Activated T-helper 1 cell treated with anti-CD3 and anti-CD28 coated beads, Interleukin-12 subunit alpha, Interleukin-12 subunit beta, Interleukin-2, Interleukin-4 antibody, amounts not matched to agents 30 ng/mL and 10 ng/mL and 1 ng/mL, durations not matched to agents 14 hours and 24 hours and 36 hours (primary cell): ENCODE measurements at regions of chr16 and their contacts with region 1.

Region 1: DNA sequence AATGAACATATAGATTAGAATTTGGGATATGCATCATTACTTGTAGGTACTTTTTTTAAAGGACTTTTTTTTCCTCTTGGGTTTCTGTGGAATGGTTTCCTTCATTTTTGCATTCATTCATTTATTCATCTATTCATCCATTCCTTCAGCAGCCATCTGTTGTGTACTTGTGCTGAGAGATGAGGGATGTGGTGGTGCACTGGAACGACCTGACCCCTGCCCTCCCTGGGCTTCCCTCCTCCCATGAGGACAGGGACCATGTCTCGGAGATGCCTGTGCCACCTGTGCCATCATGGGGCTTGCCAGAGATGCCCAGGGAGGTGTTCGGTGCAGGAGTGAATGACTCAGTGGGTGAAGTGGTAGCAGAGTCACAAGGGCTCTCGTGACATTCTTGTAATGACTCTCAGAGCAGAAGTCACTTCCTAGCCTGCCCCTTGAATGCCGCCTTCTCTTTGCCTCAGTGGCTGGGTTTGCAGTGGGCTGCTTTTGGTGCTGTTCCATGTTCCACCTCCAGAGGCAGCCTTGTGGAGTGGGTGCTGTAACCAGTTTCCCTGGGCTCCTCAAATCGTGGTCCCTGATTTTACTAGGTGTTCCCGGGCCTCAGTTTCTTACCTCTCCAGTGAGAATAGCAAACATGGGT is 43.9 kb downstream of the CLEC16A start:
- DNase-seq: peak; percentile 64
- H3K4me3 Mint-ChIP-seq: peak overlapping the region; percentile 65
- H3K27ac Mint-ChIP-seq: peak overlapping the region; percentile 93
- H3K4me1 Mint-ChIP-seq: peaks cover 92% of the 10 kb centered on the region
- H3K27me3 Mint-ChIP-seq: no peaks in the 10 kb centered on the region

Region 2: DNA sequence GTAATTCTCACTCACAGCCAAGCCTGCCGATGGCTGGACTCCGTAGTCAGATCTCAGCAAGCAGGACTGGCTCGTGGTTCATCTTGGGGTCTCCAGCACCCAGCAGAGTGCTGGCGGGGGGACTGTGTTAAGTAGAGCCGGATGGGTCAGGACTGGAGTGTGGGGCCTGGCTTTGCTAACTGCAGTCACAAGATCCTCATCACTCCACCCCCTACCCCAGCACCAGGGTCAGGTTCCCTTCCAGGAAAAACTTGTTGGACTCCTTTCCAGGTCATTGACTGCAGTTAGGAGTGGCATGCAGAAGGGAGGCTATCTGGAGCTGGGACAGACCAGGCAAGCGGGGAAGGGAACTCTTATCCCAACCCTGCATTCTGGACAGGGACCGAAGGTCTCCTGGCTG is 105.3 kb before region 1 on chr16:
- intact Hi-C with region 1: no loop called
- DNase-seq: no peak
- H3K4me3 Mint-ChIP-seq: no peak overlapping the region
- H3K27ac Mint-ChIP-seq: no peak overlapping the region
- H3K4me1 Mint-ChIP-seq: peaks cover 56% of the 10 kb centered on the region
- H3K27me3 Mint-ChIP-seq: peaks cover 19% of the 10 kb centered on the region

Region 3: DNA sequence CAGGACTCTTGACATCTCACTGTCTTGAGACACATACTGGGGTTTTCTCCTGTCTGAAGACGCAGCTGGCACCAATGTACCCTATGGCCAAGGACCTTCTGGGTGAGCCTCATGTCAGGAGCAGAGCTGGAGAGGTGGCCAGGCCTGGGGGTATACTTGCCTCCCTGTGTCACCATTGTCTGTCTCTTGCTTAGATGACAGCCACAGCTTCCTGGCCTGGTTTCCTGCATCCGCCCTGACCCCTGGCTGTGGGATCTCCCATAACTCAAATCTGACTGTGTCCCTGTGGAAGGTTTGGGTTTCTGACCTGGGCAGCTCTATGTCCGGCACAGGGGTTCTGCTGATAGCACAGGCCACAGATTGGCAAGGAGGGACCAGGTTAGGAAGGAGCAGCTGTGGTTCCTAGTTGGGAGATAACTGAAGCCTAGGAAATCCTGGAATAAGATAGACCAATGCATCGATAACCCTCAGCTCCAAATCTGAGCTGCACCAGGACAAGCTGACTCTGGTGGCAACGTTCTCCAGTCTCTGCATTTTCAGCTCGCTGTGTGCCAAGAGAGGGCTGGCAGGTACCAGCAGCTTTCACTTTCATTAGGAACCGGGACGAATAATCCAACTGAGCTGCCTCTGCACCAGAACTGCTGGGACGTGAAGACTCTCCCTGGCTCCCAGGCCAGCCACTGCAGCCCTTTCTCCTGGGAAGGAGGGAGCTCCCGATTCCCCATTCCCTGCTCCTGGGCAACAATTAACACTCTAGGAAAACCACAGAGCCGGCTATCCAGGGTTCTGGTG is 51.0 kb before region 1 on chr16:
- intact Hi-C with region 1: no loop called
- DNase-seq: no peak
- H3K4me3 Mint-ChIP-seq: peak overlapping the region; percentile 40
- H3K27ac Mint-ChIP-seq: no peak overlapping the region
- H3K4me1 Mint-ChIP-seq: peaks cover 58% of the 10 kb centered on the region
- H3K27me3 Mint-ChIP-seq: no peaks in the 10 kb centered on the region

Region 4: DNA sequence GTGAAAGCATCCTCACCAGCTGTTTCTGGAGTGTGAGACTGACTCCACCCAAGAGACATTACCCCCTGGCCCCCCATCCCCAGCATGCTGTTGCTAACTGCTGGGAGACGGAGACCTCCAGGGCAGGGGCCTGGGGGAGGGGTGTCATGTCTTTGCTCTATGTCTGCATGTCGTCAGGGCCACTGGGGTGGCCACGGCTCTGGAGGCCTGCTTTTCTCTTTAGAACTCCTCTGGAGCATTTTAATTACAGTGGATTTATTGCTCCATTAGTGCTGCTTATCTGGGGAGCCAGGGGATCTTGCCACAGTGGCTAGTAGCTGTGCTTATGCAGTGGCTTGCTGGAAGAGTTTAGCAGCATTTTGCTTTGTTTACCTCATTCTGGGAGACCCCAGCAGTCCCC is 11.7 kb before region 1 on chr16:
- intact Hi-C with region 1: loop called (anchors 1 kb)
- DNase-seq: no peak
- H3K4me3 Mint-ChIP-seq: no peak overlapping the region
- H3K27ac Mint-ChIP-seq: no peak overlapping the region
- H3K4me1 Mint-ChIP-seq: peaks cover 67% of the 10 kb centered on the region
- H3K27me3 Mint-ChIP-seq: no peaks in the 10 kb centered on the region

Region 5: GRCh38 chr16:11051879-11052808 is 63.9 kb after region 1 on chr16:
- intact Hi-C with region 1: loop called (anchors 1 kb)
- DNase-seq: peak; percentile 75
- H3K4me3 Mint-ChIP-seq: peak overlapping the region; percentile 60
- H3K27ac Mint-ChIP-seq: peak overlapping the region; percentile 83
- H3K4me1 Mint-ChIP-seq: peaks cover 68% of the 10 kb centered on the region
- H3K27me3 Mint-ChIP-seq: no peaks in the 10 kb centered on the region

Region 6: DNA sequence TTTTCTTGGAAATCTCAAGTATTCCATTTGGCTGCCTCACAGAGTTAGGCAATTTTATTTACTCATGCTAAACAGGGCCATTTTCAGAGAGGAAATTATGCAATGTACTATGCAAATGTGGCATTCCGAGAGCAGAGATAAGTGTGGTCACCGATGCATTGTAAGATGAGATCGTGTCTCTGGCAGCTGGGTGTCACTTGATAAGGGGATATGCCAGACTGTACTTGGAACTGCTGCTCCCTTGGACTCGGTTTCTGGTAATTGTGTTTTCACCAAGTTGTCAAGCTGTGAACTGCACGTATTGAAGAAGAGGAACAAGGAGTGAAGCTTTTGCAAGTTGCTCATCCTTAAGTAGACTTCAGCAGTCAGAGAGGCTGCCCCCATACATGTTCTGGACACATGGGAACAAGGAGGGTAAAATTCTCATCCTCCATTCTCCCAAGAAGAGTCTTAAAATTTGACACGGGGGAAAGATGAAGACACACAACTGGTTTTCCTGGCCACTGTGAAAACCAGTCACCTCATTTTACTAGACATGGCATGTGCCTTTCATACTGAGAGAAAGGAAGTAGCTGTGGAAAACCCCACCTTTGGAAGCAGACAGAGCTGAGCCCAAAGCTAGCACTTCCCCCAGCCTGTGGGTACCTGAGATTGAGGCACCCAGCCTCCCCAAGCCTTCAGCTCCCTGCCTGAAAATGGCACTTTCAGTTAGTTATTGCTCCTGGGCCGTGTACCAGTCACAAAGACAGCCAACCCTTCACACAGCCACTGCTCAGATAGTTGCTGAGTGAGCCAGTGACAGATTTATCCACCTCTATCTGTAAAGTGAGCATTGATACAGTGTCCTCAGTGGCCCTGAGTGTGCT is 117.0 kb after region 1 on chr16:
- intact Hi-C with region 1: loop called (anchors 1 kb)
- DNase-seq: peak; percentile 44
- H3K4me3 Mint-ChIP-seq: peak overlapping the region; percentile 65
- H3K27ac Mint-ChIP-seq: peak overlapping the region; percentile 88
- H3K4me1 Mint-ChIP-seq: peaks cover 75% of the 10 kb centered on the region
- H3K27me3 Mint-ChIP-seq: no peaks in the 10 kb centered on the region

Region 7: DNA sequence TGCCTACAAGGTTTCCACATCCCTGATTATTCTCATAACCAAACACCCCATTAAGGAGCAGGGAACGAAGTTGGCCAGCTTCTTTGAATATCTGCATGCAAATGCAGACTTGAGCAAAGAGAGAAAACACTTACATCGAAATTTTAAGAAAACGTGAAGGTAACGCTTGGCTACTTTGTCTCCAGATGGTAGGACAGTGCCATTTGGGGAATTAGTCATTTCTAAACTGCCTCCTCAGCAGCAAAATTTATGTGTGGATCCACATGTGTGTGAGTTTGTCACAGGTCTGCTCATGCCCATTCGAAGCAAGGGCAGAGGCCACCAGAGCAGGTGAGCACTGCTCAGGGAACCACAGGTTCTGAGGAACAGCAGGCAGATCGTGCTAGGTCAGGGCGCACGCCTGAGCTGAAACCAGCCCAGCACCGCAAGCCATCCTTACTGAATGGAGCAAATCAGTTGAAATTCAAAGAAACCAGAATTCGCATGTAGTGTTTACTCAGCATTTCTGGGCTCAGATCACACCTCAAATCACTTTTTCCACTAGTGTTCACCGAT is 187.6 kb after region 1 on chr16:
- intact Hi-C with region 1: loop called (anchors 5 kb)
- DNase-seq: no peak
- H3K4me3 Mint-ChIP-seq: peak overlapping the region; percentile 50
- H3K27ac Mint-ChIP-seq: peak overlapping the region; percentile 78
- H3K4me1 Mint-ChIP-seq: peaks cover 61% of the 10 kb centered on the region
- H3K27me3 Mint-ChIP-seq: peaks cover 2% of the 10 kb centered on the region